GM12878 (cell line): ENCODE measurements at regions of chr12 and their contacts with region 1.

Region 1: DNA sequence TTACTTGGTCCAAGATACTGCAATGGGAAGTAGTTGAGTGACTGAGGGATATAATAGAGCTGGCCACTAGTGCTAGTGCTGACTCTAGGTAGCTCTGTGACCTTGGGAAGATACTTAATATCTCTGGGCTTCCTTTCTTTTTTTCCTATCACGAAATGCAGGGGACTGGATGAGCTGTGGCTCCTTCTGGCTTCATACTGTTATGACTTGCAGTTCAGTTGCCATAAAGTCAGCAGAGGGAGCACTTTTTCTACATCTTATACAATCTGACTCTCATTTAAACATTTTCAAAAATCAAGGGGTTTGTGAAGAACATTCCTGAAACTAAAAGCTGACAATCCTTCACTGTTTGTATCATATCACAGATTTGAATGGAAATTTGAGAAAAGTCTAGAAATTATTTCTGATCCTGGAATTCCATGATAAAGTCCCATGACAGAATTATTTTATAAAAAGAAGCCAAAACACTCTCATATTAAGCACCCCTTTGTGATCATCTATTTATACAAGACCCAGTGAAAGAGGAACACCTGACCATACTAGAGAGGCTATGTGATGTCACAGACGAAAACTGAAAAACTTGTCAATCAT is 5.4 kb downstream of the BHLHE41 start:
- DNase-seq: no peak
- ATAC-seq: peak; percentile 57
- H3K4me3 ChIP-seq: no peak overlapping the region
- H3K27ac ChIP-seq: no peak overlapping the region
- H3K4me1 ChIP-seq: peaks cover 25% of the 10 kb centered on the region
- H3K27me3 ChIP-seq: peaks cover 8 to 28% of the 10 kb centered on the region in 2 experiments
- CTCF ChIP-seq: peak; percentile 40 to 57 (median 46); a peak in 5 of 6 replicates
- EP300 ChIP-seq: no peak
- POLR2A ChIP-seq: no peak
- RAD21 ChIP-seq: peak; percentile 65

Region 2: DNA sequence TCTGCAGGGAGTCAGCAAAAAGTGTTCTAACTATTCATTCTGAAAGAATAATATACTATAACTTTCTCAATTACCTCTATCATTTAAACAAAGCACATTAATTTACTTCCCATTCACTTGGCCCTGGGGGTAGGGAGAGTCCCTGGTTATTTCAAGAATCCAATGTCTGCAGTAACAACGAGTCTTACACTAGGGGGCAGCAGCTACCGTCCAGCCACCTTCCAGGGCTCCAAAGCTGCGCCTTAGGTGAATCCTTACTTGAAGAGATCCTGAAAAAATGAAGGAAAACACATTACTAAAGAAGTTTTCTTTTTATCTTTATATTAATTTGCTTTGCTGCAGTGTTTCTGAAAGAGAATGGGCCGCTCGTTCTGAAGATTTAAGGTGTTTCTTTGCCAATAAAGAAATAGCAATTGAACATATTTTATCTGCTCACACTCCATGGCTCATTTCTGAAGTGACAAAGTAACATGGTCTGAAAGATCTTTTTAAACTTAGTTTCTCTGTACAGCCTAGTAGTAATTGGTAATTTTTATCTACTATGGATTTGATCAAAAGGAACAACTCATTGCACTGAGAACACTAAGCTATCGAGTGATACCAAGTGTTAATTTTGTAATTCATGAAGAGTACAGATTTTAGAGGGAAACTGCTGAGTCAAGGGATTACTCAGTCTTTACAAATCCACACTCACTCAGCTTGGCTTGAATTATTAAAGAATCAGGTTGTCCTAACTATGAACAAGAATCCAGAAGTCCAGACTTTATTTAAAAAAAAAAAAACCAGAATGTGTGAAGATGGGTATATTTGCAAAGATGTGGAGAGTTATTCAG is 22.2 kb before region 1 on chr12:
- CTCF ChIA-PET with region 1: interaction called, 63 read pairs
- POLR2A ChIA-PET with region 1: interaction called, 3 read pairs
- RAD21 ChIA-PET with region 1: interaction called, 19 read pairs
- SMC1A ChIA-PET with region 1: interaction called, 29 read pairs
- in situ Hi-C with region 1: no loop called
- intact Hi-C with region 1: no loop called
- DNase-seq: no peak
- ATAC-seq: peak; percentile 97
- H3K4me3 ChIP-seq: no peak overlapping the region
- H3K27ac ChIP-seq: no peak overlapping the region
- H3K4me1 ChIP-seq: no peaks in the 10 kb centered on the region
- H3K27me3 ChIP-seq: peaks cover 0 to 13% of the 10 kb centered on the region in 2 experiments; a peak in 2 of 4 replicates
- CTCF ChIP-seq: peak; percentile 93 to 94 (median 94)
- EP300 ChIP-seq: no peak
- POLR2A ChIP-seq: no peak
- RAD21 ChIP-seq: peak; percentile 91

Region 3: GRCh38 chr12:26274441-26275312 is 155.2 kb after region 1 on chr12:
- CTCF ChIA-PET with region 1: interaction called, 43 read pairs
- POLR2A ChIA-PET with region 1: interaction called, 5 read pairs
- RAD21 ChIA-PET with region 1: interaction called, 29 read pairs
- SMC1A ChIA-PET with region 1: interaction called, 23 read pairs
- in situ Hi-C with region 1: no loop called
- intact Hi-C with region 1: loop called (anchors 5 kb)
- DNase-seq: peak; percentile 94
- ATAC-seq: peak; percentile 95
- H3K4me3 ChIP-seq: no peak overlapping the region
- H3K27ac ChIP-seq: peak overlapping the region; percentile 73
- H3K4me1 ChIP-seq: peaks cover 44% of the 10 kb centered on the region
- H3K27me3 ChIP-seq: no peaks in the 10 kb centered on the region
- CTCF ChIP-seq: peak in 1 of 3 experiments; percentile 18; a peak in 1 of 6 replicates
- EP300 ChIP-seq: peak; percentile 37 to 79; a peak in 3 of 4 replicates
- POLR2A ChIP-seq: peak; percentile 40; the same call in 1 of the 2 replicates
- RAD21 ChIP-seq: peak; percentile 37; the same call in 1 of the 2 replicates

Region 4: DNA sequence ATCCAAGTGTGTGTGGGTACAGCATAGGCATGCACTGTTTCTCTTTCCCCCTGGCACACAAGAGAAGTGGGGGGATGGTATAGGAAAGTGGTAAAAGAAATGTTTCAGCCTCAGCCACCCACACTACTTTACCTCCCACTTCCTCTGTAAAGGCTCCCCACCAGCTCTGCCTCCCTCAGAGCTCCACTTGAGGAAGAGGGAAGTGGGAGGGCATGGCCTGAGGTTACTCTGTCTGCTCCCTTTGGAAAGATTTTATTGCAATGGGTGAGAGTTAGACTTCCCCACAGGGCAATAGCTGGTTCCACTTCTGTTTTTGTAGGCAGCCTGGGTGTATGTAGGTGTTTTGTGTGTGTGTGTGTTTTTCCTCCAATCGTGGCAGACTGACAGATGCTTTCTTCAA is 221.2 kb after region 1 on chr12:
- CTCF ChIA-PET with region 1: interaction called, 17 read pairs
- POLR2A ChIA-PET with region 1: interaction called, 3 read pairs
- RAD21 ChIA-PET with region 1: interaction called, 8 read pairs
- SMC1A ChIA-PET with region 1: interaction called, 9 read pairs
- in situ Hi-C with region 1: no loop called
- intact Hi-C with region 1: no loop called
- DNase-seq: peak; percentile 37
- ATAC-seq: peak; percentile 87
- H3K4me3 ChIP-seq: no peak overlapping the region
- H3K27ac ChIP-seq: no peak overlapping the region
- H3K4me1 ChIP-seq: peaks cover 20% of the 10 kb centered on the region
- H3K27me3 ChIP-seq: no peaks in the 10 kb centered on the region
- CTCF ChIP-seq: no peak
- EP300 ChIP-seq: no peak
- POLR2A ChIP-seq: no peak
- RAD21 ChIP-seq: no peak

Region 5: DNA sequence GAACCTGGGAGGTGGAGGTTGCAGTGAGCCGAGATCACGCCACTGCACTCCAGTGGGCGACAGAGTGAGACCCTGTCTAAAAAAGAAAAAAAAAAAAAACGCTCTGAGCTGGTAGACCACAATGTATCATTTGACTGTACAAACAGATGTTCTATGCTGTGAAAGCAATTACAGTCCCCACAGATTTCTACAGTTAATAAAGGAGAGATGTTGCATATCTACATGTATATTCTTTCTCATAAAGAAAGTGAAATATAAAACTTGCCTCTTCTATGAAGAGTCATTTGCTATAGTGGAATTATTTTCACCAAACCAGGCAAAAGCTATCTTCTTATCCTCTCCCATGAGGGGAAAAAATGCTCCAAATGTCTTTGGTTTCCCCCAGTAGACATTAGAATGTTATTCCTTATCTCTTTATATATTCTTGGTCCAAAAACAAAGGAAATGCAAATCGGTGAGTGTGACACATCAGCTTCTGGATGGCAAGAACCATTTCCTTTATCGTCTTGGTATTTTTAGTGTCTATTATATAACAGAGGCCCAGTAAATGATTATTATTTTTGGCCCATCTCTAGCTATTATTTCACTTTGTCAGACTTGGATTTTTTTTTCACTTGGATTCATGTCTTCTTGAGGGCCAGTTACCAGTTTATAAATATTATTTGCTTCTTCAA is 306.2 kb after region 1 on chr12:
- CTCF ChIA-PET with region 1: interaction called, 11 read pairs
- POLR2A ChIA-PET with region 1: no interaction called
- RAD21 ChIA-PET with region 1: interaction called, 6 read pairs
- SMC1A ChIA-PET with region 1: interaction called, 11 read pairs
- in situ Hi-C with region 1: no loop called
- intact Hi-C with region 1: no loop called
- DNase-seq: no peak
- ATAC-seq: peak; percentile 57
- H3K4me3 ChIP-seq: no peak overlapping the region
- H3K27ac ChIP-seq: no peak overlapping the region
- H3K4me1 ChIP-seq: no peaks in the 10 kb centered on the region
- H3K27me3 ChIP-seq: no peaks in the 10 kb centered on the region
- CTCF ChIP-seq: no peak
- EP300 ChIP-seq: no peak
- POLR2A ChIP-seq: no peak
- RAD21 ChIP-seq: no peak

Region 6: DNA sequence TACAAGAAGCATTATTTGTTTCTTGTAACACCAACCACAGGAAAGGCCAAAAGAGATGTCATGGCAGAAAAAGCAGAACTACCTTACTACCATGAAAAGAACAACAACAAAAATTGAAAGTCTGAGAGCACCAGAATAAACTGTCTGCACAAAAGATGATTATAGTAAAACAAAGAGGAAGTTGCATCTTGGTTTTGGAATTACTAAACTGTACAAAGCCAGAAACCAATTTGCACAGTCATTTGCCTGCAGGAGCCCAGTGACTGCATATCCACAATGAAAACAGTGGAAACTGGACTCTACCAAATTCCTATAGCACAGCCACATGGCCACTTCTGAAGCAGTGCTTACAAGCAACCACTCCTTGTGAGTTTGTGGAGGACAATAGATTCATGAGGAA is 352.1 kb after region 1 on chr12:
- CTCF ChIA-PET with region 1: interaction called, 11 read pairs
- POLR2A ChIA-PET with region 1: no interaction called
- RAD21 ChIA-PET with region 1: interaction called, 13 read pairs
- SMC1A ChIA-PET with region 1: interaction called, 11 read pairs
- in situ Hi-C with region 1: no loop called
- intact Hi-C with region 1: loop called (anchors 2 kb)
- DNase-seq: peak; percentile 82
- ATAC-seq: peak; percentile 84
- H3K4me3 ChIP-seq: peak overlapping the region; percentile 32; the same call in 1 of the 2 replicates
- H3K27ac ChIP-seq: peak overlapping the region; percentile 27; the same call in 1 of the 2 replicates
- H3K4me1 ChIP-seq: peaks cover 35% of the 10 kb centered on the region
- H3K27me3 ChIP-seq: no peaks in the 10 kb centered on the region
- CTCF ChIP-seq: peak in 1 of 3 experiments; percentile 21; a peak in 1 of 6 replicates
- EP300 ChIP-seq: peak; percentile 82 to 87; a peak in 3 of 4 replicates
- POLR2A ChIP-seq: no peak
- RAD21 ChIP-seq: peak; percentile 36; the same call in 1 of the 2 replicates

Region 7: GRCh38 chr12:26651566-26652188 is 532.2 kb after region 1 on chr12:
- CTCF ChIA-PET with region 1: interaction called, 7 read pairs
- POLR2A ChIA-PET with region 1: no interaction called
- RAD21 ChIA-PET with region 1: interaction called, 8 read pairs
- SMC1A ChIA-PET with region 1: interaction called, 10 read pairs
- in situ Hi-C with region 1: loop called (anchors 25 kb)
- intact Hi-C with region 1: no loop called
- DNase-seq: peak; percentile 21
- ATAC-seq: peak; percentile 84
- H3K4me3 ChIP-seq: no peak overlapping the region
- H3K27ac ChIP-seq: no peak overlapping the region
- H3K4me1 ChIP-seq: no peaks in the 10 kb centered on the region
- H3K27me3 ChIP-seq: no peaks in the 10 kb centered on the region
- CTCF ChIP-seq: peak; percentile 55 to 75 (median 73)
- EP300 ChIP-seq: no peak
- POLR2A ChIP-seq: no peak
- RAD21 ChIP-seq: peak; percentile 59